GM18951 (cell line): ENCODE measurements at regions of chr2 and their contacts with region 1.

Region 1: DNA sequence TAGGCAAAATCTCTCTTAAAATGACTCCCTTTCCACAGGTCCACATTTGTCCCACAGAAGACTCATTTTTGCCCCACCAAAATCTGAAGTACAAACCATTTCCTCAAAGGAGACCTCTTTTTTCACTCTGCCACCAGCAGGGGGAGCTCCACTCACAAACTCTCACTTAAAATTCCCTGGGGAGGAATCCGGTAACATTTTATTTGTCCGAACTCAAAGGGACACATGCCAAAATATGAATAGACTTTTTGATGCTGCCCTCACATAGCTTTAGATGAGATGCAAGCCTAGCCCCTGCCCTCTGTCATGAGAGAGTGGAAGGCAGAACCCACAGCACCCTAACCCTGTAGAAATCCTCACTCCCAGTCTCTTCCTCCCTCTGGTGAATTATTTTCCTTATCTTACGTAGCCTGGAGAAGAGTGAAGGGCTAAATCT is 57.1 kb downstream of the RMDN2 start:
- POLR2A ChIP-seq: no peak

Region 2: GRCh38 chr2:37809525-37809924 is 172.6 kb before region 1 on chr2:
- in situ Hi-C with region 1: no loop called
- POLR2A ChIP-seq: no peak

Region 3: DNA sequence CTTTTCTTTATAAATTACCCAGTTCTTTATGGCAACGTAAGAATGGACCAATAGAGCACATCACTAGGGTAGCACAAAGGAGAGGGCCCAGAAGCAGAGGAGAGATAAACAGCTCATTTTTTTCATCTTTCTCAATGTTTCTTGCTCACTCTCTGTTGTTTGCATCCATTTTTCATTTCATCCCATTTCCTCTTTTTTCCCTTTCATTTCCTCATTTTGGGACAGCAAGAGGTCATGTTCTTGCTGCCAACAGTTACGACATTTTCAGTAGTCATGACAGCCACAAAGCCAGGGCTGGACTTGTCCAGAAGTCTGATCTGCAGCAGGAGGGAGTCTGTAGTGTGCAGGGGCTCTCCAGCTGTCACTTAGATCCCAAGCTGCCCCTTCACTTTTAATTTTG is 146.5 kb after region 1 on chr2:
- in situ Hi-C with region 1: loop called (anchors 10 kb)
- POLR2A ChIP-seq: no peak

Region 4: DNA sequence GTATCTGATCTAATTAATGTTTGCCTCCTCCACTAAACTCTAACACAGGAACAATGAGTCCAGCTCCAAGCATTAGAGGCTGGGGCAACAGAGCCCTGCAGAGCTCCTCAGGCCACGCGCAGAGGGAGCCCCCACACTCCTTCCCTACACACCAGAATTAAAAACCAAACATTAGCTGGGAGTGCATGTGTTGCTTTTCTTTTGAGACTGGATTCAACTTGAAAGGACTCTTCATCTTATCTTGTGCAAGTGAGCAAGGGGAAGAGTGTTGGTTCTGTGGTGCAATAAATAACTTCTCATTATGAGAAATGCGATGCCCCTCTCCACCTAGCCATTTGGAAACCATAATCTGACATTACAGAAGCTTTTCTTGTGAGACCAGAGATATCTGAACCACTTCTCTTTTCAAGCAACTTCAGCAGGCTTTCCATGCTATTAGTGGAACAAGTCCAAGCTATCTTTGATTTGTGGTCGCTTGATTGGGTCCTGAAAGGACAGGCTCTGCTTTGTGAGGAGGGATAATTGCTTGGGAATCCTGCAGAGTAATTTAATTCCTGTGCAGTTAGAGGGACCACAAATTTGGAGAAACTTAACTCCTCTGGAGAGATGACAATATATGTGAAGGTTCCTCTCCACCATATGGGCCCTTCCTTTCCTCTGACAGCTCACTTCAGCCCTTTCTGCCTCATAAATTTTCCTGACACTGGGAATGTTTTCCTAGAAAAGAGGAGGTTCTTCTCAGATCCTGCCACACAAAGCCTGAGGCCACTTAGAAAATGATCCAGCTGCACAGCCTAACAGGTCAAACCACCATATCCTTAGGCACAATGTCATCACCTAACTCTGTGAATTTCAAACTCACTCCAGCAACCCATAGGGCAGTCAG is 282.5 kb after region 1 on chr2:
- in situ Hi-C with region 1: loop called (anchors 10 kb)
- POLR2A ChIP-seq: no peak